Motor neuron (in vitro differentiated cells): ENCODE measurements at regions of chr19 and their contacts with region 1.

Region 1: DNA sequence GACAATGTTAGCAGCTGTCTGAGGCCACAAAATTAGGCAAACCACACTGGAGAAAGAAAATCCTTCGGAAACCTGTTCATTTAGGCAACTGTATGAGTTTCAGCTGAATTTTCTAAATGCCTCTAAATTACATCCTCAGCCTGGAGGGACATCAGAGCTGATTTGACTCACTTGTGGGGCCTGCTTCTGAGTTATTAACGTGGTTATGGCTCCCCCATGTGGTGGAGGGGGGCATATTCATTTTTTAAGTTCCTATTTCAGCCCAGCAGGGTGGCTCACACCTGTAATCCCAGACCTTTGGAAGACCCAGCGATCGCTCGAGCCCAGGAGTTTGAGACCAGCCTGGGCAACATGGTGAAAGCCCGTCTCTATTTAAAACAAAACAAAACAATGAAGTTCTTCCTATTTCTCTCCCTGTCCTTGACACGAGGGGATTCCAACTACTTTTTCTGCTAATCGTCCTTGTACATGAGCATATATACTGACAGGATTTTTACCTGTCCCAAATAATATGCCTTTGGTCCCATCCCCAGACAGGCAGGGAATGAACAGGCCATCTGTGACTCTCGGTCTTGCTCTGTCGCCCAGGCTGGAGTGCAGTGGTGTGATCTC is 31.5 kb upstream of the HIF3A start:
- ATAC-seq: peak; percentile 92 to 98 (median 96)
- H3K4me3 ChIP-seq: no peak overlapping the region
- H3K27ac ChIP-seq: no peak overlapping the region
- H3K4me1 ChIP-seq: no peaks in the 10 kb centered on the region

Region 2: DNA sequence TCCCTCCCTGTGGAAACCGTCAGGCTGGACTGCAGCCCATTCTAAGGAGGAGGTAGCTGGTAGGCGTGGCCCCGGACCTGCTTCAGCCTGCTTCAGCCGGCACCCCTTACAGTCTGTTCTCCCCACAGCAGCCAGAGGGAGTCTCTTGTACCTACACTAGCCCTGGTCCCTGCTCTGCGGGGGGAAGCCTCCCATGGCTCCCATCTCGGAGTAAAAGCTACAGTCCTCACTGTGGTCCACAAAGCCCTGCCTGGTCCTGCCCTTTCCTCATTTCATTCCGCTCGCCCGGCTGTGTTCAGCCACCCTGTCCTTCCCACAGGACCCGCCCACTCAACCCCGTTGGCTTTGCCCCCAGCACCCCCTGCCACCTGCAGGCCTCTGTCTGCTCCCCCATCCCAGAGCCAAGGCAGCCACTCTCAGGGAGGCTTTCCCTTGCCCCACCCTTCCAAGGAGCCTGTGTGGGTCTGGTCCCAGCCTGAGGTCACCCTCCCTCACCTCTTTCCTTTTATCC is 243.7 kb before region 1 on chr19:
- in situ Hi-C with region 1: loop called in 2 of 9 experiments (anchors 5 to 10 kb)
- ATAC-seq: peak in 5 of 8 experiments; percentile 16 to 62 (median 40)
- H3K4me3 ChIP-seq: no peak overlapping the region
- H3K27ac ChIP-seq: peak overlapping the region in 1 of 2 donors; percentile 2
- H3K4me1 ChIP-seq: peaks cover 9 to 12% of the 10 kb centered on the region in 2 donors

Region 3: DNA sequence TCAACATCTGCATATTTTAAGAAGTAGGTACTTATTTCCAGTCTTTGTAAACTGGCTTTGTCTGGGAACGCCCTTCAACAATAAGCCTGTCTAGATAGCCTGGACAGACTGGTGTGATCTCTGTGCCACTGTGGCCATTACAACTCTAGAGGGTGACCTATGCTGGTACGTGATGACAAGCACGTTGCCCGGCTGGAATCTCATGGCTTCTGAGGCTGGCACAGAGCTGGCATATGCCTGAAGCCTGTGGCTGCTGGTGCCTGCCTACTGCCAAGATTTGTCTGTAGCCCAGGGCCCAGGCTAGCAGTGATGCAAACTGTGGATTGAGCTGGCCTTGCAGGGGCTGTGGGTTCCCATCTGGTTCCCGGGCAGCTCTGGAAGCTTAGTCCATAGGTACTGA is 174.9 kb before region 1 on chr19:
- in situ Hi-C with region 1: loop called in 7 of 9 experiments (anchors 10 to 25 kb)
- ATAC-seq: no peak
- H3K4me3 ChIP-seq: no peak overlapping the region
- H3K27ac ChIP-seq: no peak overlapping the region
- H3K4me1 ChIP-seq: no peaks in the 10 kb centered on the region

Region 4: GRCh38 chr19:46218160-46218559 is 47.2 kb before region 1 on chr19:
- in situ Hi-C with region 1: no loop called
- ATAC-seq: peak in 4 of 8 experiments; percentile 24 to 65 (median 40)
- H3K4me3 ChIP-seq: no peak overlapping the region
- H3K27ac ChIP-seq: no peak overlapping the region
- H3K4me1 ChIP-seq: no peaks in the 10 kb centered on the region